Activated naive CD4-positive, alpha-beta T cell treated with anti-CD3 and anti-CD28 coated beads, Interleukin-2, amount 10 ng/mL, durations not matched to agents 7 days and 5 days (primary cell): ENCODE measurements at regions of chr15 and their contacts with region 1.

Region 1: GRCh38 chr15:72722071-72722696 is 36.2 kb downstream of the BBS4 start:
- DNase-seq: peak; percentile 82
- H3K4me3 Mint-ChIP-seq: no peak overlapping the region
- H3K27ac Mint-ChIP-seq: no peak overlapping the region
- H3K4me1 Mint-ChIP-seq: no peaks in the 10 kb centered on the region
- H3K27me3 Mint-ChIP-seq: no peaks in the 10 kb centered on the region

Region 2: DNA sequence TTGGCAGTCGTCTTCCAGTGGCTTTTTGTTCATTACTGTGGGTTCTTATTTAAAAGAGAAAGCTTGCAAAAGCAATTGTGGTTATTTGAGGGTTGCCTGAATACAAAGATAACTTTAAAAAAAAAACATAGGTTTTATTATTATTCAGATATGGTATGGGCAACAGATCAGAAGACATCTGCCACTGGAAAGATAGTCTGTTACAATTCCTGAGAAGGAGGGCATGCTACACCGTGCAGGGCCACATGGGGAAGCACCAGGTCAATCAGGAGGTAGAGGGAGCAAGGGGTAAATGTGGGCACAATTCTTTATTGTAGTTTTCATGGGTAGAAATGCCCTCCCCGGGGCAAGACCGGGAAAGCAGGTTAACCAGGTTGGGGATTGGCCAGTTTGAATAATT is 10.3 kb after region 1 on chr15:
- CTCF ChIA-PET with region 1: interaction called, 26 read pairs
- DNase-seq: no peak
- H3K4me3 Mint-ChIP-seq: no peak overlapping the region
- H3K27ac Mint-ChIP-seq: no peak overlapping the region
- H3K4me1 Mint-ChIP-seq: peaks cover 10% of the 10 kb centered on the region
- H3K27me3 Mint-ChIP-seq: no peaks in the 10 kb centered on the region

Region 3: GRCh38 chr15:72740219-72740618 is 18.0 kb after region 1 on chr15:
- CTCF ChIA-PET with region 1: interaction called, 26 read pairs
- DNase-seq: no peak
- H3K4me3 Mint-ChIP-seq: peak overlapping the region; percentile 3
- H3K27ac Mint-ChIP-seq: peak overlapping the region; percentile 79
- H3K4me1 Mint-ChIP-seq: peaks cover 42% of the 10 kb centered on the region
- H3K27me3 Mint-ChIP-seq: no peaks in the 10 kb centered on the region

Region 4: DNA sequence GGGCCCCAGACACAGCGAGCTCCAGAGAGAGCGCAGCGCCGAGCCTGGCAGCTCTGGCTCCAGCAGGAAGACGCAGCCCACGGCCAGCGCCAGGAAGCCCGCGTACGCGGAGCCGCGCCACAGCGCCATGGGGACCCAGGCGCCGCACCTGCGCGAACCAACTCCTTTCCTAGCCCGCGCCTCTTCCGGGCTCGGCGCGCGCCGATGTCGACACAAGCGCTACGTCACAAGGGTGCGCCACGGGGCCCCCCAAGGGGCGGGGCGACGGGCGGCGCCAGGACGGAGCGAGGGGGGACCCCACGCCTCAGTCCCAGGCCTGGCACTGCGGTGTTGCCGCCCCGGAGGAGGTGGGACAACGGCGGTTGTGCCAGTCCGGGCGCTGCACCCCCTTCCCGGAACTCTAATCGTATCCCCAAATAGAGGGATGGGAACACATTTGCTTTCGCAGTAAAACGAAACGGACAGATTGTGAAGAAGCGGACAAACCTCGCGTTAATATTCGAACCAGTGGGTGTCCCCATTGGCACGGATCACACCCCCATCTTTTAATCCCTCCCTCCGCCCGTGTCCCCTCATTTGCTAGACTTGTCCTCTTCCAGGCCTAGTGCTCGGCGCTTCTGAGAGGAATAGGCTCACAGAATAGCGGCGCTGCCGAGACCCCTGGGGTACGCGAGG is 61.5 kb after region 1 on chr15 and contains the start of gene ADPGK:
- CTCF ChIA-PET with region 1: interaction called, 15 read pairs
- DNase-seq: peak; percentile 91
- H3K4me3 Mint-ChIP-seq: peak within 1 kb of the TSS; percentile 84
- H3K27ac Mint-ChIP-seq: peak within 1 kb of the TSS; percentile 97
- H3K4me1 Mint-ChIP-seq: peaks cover 51% of the 10 kb centered on the region
- H3K27me3 Mint-ChIP-seq: no peaks in the 10 kb centered on the region

Region 5: DNA sequence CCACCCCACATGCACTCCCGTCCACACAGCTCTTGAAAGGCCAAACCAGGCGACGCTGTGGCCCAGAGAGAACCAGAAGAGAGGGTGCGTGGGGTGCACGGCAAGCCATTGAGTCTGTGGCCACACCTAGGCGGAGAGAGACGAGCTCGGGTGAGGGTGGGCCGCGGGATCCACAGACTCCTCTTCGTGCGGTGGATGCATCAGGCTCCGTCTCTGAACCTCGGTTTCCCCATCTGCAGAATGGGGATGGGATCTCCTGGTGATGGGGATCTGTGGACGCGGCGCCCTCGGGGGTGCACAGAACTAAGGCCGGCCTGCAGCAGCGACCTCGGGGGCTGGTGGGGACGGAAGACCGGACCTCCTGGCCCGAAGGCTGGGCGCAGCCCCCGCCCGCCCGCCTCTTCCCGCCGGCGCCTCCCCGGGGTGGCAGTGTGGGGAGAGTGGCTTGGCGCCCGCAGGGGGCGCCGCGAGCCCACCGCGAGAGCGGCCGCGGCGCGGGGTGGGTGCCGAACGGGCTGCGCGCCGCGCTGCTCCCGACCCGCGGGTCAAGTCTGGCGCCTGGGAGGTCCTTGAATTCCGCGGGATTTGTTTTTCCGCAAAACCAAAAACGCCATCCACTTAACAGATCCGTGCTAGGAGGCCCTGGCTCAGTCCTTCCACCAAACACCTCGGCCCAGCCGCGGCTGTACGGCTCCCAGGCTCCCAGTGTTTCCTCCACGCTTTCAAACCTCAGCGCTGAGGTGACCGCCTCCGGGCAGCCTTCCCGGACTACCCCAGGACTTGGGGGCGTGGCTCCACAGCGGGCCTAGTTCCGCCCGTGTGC is 74.5 kb after region 1 on chr15:
- CTCF ChIA-PET with region 1: interaction called, 12 read pairs
- DNase-seq: peak; percentile 42
- H3K4me3 Mint-ChIP-seq: peak overlapping the region; percentile 66
- H3K27ac Mint-ChIP-seq: no peak overlapping the region
- H3K4me1 Mint-ChIP-seq: peaks cover 13% of the 10 kb centered on the region
- H3K27me3 Mint-ChIP-seq: peaks cover 59% of the 10 kb centered on the region

Region 6: DNA sequence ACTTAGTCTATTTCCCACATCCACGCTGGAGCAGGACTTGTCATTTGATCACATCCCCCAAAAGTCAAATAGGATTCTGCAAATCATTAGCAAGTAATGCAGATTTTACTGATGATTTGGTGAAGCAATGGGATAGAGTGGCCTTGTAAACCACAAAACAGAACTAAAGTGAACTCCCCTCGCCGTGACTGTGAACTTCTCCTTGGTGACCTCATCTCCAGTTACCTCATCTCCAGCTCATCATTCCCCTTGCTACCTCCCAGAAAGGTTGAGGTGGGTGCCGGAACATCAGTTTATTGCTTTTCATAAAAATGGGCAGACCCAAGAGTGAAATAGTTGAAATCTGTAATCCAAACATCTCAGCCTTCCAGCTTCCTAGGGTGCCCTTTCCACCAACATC is 98.1 kb after region 1 on chr15:
- CTCF ChIA-PET with region 1: no interaction called
- DNase-seq: no peak
- H3K4me3 Mint-ChIP-seq: no peak overlapping the region
- H3K27ac Mint-ChIP-seq: no peak overlapping the region
- H3K4me1 Mint-ChIP-seq: no peaks in the 10 kb centered on the region
- H3K27me3 Mint-ChIP-seq: peaks cover 25% of the 10 kb centered on the region

Region 7: DNA sequence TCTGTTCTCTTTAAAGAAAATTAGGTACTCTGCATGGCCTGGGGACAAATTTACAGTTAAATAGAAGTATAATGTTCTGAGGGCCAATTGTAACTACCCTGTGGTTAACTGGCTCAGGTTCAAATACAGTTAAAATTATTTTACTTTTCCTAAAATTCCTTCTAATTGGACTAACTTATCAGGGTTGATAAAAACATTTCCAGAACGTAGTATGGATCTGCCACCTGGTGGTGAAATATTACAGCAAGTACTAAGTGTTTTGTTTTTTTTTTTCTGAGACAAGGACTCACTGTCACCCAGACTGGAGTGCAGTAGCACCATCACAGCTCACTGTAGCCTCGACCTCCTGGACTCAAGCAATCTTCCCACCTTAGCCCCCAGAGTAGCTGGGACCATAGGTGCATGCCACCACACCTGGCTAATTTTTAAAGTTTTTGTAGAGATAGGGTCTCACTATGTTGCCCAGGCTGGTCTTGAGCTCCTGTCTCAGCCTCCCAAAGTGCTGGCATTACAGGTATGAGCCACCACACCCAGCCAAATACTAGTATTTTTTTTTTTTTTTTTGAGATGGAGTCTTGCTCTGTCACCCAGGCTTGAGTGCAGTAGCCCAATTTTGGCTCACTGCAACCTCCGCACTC is 359.3 kb after region 1 on chr15:
- CTCF ChIA-PET with region 1: interaction called, 18 read pairs
- DNase-seq: no peak
- H3K4me3 Mint-ChIP-seq: no peak overlapping the region
- H3K27ac Mint-ChIP-seq: no peak overlapping the region
- H3K4me1 Mint-ChIP-seq: no peaks in the 10 kb centered on the region
- H3K27me3 Mint-ChIP-seq: no peaks in the 10 kb centered on the region

Region 8: GRCh38 chr15:73265536-73266153 is 543.5 kb after region 1 on chr15:
- CTCF ChIA-PET with region 1: interaction called, 11 read pairs
- DNase-seq: peak; percentile 72
- H3K4me3 Mint-ChIP-seq: no peak overlapping the region
- H3K27ac Mint-ChIP-seq: no peak overlapping the region
- H3K4me1 Mint-ChIP-seq: no peaks in the 10 kb centered on the region
- H3K27me3 Mint-ChIP-seq: no peaks in the 10 kb centered on the region